Activated B cell treated with CpG ODN at 0.5 μM for 24 hours (primary cell): ENCODE measurements at regions of chr3 and their contacts with region 1.

Region 1: DNA sequence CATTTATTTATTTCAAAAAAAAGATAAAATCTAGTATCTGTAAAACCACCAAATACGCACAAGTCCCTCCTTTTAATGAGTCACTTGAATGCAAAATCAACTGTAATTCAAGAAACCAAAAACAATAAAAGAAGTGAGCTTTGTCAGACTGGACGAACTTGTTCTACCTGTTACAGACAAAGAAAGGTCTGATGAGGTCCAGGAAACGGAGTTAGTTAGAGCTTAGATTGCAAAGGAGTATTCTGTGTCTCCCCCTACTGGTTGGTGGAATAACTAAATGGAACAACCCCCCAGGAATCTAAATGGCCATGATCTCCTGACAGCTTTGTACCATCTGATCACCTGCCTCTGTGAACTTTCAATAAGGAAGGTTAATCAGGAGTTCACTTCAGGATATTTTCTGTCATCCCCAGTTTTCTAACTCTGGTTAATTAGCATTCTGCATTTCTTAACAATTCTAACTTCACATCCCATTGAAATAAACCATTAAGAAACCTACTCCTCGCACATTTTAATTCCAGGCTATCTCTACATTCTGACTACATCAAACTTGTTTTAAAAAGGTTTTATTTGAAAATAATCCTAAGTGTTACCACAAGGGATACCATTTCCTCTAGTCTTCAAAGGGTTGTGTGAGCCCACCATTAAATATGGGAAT is 333.0 kb upstream of the SATB1 start:
- DNase-seq: no peak
- ATAC-seq: peak; percentile 78
- H3K4me3 Mint-ChIP-seq: no peak overlapping the region
- H3K27ac Mint-ChIP-seq: no peak overlapping the region
- H3K4me1 Mint-ChIP-seq: no peaks in the 10 kb centered on the region
- H3K27me3 Mint-ChIP-seq: no peaks in the 10 kb centered on the region
- CTCF ChIP-seq: peak; percentile 27

Region 2: DNA sequence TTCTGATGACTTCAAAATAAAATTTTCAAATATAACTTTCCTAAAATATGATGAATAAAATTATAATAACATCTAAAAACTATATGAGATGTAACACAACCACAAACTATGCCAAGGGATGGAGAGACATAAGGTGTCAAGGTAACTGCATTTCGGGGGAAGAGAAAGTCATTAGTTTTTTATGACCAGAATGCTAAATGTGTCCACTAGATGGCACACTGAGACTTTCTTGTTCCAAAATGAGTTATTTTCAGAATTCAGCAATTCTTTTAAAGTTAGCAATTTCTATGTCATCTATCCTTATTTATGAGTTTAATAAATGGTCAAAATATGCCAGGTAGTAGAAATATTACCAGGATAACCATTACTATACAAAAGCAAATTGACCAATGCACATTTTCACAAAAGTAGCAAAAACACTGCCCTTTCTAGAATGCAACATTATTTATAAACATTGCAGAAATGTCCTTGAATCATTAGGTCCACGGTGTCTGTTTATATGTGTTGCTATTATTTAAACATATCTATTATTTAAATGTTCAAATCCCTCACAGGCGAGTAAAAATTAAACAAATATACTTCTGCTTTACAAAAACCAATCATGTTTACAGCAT is 1499.2 kb before region 1 on chr3:
- CTCF ChIA-PET with region 1: no interaction called
- POLR2A ChIA-PET with region 1: no interaction called
- intact Hi-C with region 1: loop called (anchors 10 kb)
- DNase-seq: no peak
- ATAC-seq: no peak
- H3K4me3 Mint-ChIP-seq: no peak overlapping the region
- H3K27ac Mint-ChIP-seq: no peak overlapping the region
- H3K4me1 Mint-ChIP-seq: no peaks in the 10 kb centered on the region
- H3K27me3 Mint-ChIP-seq: no peaks in the 10 kb centered on the region
- CTCF ChIP-seq: peak; percentile 73

Region 3: GRCh38 chr3:18389108-18389733 is 369.0 kb before region 1 on chr3:
- CTCF ChIA-PET with region 1: interaction called, 6 read pairs
- POLR2A ChIA-PET with region 1: no interaction called
- intact Hi-C with region 1: loop called (anchors 1 kb)
- DNase-seq: no peak
- ATAC-seq: no peak
- H3K4me3 Mint-ChIP-seq: no peak overlapping the region
- H3K27ac Mint-ChIP-seq: no peak overlapping the region
- H3K4me1 Mint-ChIP-seq: no peaks in the 10 kb centered on the region
- H3K27me3 Mint-ChIP-seq: no peaks in the 10 kb centered on the region
- CTCF ChIP-seq: peak; percentile 10

Region 4: DNA sequence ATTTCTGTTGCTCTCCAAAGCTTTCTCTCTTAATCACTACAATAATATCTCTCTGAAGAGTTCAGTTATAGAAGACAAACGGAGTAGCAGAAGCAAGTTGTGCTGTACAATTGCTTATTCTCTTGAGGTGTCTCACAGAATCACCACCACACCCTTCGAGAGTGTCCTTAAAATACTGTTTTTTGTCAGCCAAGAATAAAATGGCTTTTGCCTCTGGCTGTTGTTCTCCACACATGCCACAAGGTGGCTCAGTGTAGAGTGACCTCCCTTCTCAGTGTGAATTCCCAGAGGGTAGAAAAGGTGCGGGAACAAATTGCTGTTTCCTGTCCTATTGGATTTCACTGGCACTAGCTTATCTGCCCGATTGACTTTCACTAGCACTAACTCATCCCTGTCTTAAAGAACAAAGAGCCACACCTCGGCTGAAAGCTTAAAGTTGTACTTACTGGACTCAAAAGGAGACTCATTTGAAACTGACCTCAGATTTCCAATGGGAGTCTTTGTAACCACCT is 198.8 kb before region 1 on chr3:
- CTCF ChIA-PET with region 1: interaction called, 128 read pairs
- POLR2A ChIA-PET with region 1: interaction called, 5 read pairs
- intact Hi-C with region 1: loop called (anchors 1 kb)
- DNase-seq: no peak
- ATAC-seq: peak; percentile 65
- H3K4me3 Mint-ChIP-seq: no peak overlapping the region
- H3K27ac Mint-ChIP-seq: no peak overlapping the region
- H3K4me1 Mint-ChIP-seq: peaks cover 27% of the 10 kb centered on the region
- H3K27me3 Mint-ChIP-seq: no peaks in the 10 kb centered on the region
- CTCF ChIP-seq: no peak

Region 5: GRCh38 chr3:18687286-18687685 is 70.9 kb before region 1 on chr3:
- CTCF ChIA-PET with region 1: no interaction called
- POLR2A ChIA-PET with region 1: no interaction called
- intact Hi-C with region 1: no loop called
- DNase-seq: no peak
- ATAC-seq: no peak
- H3K4me3 Mint-ChIP-seq: no peak overlapping the region
- H3K27ac Mint-ChIP-seq: no peak overlapping the region
- H3K4me1 Mint-ChIP-seq: no peaks in the 10 kb centered on the region
- H3K27me3 Mint-ChIP-seq: no peaks in the 10 kb centered on the region
- CTCF ChIP-seq: no peak

Region 6: DNA sequence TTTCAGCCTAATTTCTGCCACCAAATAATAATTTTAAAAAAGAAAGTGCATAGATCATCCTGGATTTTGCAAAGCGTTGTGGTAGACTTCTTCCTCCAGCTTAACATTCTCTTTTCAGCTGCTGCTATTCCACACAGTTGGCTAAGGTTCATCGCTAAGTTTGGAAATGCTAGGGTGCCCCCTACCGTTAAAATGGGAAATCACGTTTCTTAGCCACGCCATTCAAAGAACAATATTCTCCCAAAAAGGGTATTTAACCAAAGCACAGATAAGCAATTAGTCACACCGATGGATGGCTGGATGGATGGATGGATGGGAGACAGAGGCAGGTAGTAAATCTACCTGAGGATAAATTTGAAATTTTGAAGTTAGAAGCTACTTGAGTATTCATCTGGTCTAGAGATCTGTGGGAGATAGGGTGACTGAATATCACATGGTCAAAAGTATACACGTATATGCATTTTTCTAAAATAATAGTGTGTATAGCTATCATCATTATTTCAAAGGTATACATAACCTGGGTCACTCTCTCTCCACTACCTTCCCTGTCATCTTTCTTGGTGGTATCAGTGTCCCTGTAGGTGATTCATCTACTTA is 1108.7 kb after region 1 on chr3:
- CTCF ChIA-PET with region 1: no interaction called
- POLR2A ChIA-PET with region 1: no interaction called
- intact Hi-C with region 1: loop called (anchors 2 kb)
- DNase-seq: no peak
- ATAC-seq: peak; percentile 71
- H3K4me3 Mint-ChIP-seq: no peak overlapping the region
- H3K27ac Mint-ChIP-seq: no peak overlapping the region
- H3K4me1 Mint-ChIP-seq: peaks cover 3% of the 10 kb centered on the region
- H3K27me3 Mint-ChIP-seq: peaks cover 3% of the 10 kb centered on the region
- CTCF ChIP-seq: no peak